Activated CD4-positive, alpha-beta memory T cell treated with anti-CD3 and anti-CD28 coated beads for 36 hours (primary cell): ENCODE measurements at regions of chr12 and their contacts with region 1.

Region 1: GRCh38 chr12:98698603-98699463 is 53.7 kb downstream of the APAF1 start:
- DNase-seq: peak; percentile 75
- H3K4me3 Mint-ChIP-seq: no peak overlapping the region
- H3K27ac Mint-ChIP-seq: no peak overlapping the region
- H3K4me1 Mint-ChIP-seq: peaks cover 8% of the 10 kb centered on the region
- H3K27me3 Mint-ChIP-seq: no peaks in the 10 kb centered on the region

Region 2: DNA sequence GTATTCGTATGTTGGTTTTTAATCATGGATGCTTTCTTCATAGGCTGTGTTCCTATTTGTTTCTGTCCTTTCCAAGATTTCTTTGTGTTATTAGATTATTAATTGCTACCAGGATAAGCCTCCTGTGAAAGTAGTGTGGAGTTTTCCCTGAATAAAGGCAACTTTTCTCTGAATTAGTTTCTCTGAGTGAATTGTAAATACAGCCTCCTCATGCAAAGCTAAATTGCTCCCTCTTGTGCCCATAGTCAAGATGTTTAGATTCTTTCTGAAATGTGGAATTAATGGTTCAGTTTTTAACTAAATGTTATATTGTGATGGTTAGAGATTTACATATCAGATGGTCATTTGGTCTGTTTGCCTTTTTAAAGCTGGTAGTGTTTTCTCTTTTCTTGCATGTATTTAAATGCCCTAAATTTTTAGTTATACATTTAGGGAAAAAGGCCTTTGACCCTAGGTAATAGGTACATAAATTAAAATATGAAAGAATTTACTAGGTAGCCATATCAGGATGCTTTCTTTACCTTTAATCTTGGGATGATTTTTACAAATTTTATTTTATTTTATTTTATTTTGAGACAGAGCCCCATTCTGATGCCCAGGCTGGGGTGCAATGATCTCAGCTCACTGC is 44.9 kb before region 1 on chr12:
- CTCF ChIA-PET with region 1: no interaction called
- POLR2A ChIA-PET with region 1: no interaction called
- intact Hi-C with region 1: loop called (anchors 5 kb)
- DNase-seq: no peak
- H3K4me3 Mint-ChIP-seq: no peak overlapping the region
- H3K27ac Mint-ChIP-seq: no peak overlapping the region
- H3K4me1 Mint-ChIP-seq: peaks cover 14% of the 10 kb centered on the region
- H3K27me3 Mint-ChIP-seq: no peaks in the 10 kb centered on the region

Region 3: DNA sequence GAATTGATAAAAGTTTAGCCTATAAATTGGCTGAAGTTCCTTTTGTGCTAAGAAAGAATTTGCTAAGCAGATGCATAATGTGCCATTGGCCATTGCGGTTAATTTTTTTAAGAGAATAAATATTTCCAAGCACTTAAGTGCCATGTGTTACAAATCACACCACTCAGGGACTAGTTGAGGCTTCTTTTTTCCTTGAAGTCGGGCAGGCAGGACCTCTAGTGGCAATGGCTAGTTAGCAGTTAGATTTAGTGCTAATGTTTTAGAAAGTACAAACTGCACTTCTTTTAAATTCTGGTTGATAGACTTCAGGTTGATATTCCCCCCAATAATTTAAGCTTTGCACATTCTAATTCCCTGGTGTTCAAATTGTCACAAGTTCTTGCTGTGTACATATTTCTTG is 240.5 kb after region 1 on chr12:
- CTCF ChIA-PET with region 1: no interaction called
- POLR2A ChIA-PET with region 1: no interaction called
- intact Hi-C with region 1: loop called (anchors 2 kb)
- DNase-seq: no peak
- H3K4me3 Mint-ChIP-seq: no peak overlapping the region
- H3K27ac Mint-ChIP-seq: no peak overlapping the region
- H3K4me1 Mint-ChIP-seq: no peaks in the 10 kb centered on the region
- H3K27me3 Mint-ChIP-seq: peaks cover 12% of the 10 kb centered on the region

Region 4: GRCh38 chr12:98998697-98999299 is 300.0 kb after region 1 on chr12:
- CTCF ChIA-PET with region 1: interaction called, 26 read pairs
- POLR2A ChIA-PET with region 1: no interaction called
- intact Hi-C with region 1: loop called (anchors 1 kb)
- DNase-seq: no peak
- H3K4me3 Mint-ChIP-seq: no peak overlapping the region
- H3K27ac Mint-ChIP-seq: no peak overlapping the region
- H3K4me1 Mint-ChIP-seq: no peaks in the 10 kb centered on the region
- H3K27me3 Mint-ChIP-seq: peaks cover 2% of the 10 kb centered on the region